ENCODE measurements at regions of chr2 and their contacts with region 1.

Region 1: GRCh38 chr2:237572021-237572741 is 5.8 kb downstream of the PRLH start:
- DNase-seq: peak; percentile 78 to 92 (median 84)
- ATAC-seq: peak; percentile 94
- H3K4me3 ChIP-seq: no peak overlapping the region
- H3K4me3 Mint-ChIP-seq: no peak overlapping the region
- H3K27ac ChIP-seq: no peak overlapping the region
- H3K27ac Mint-ChIP-seq: no peak overlapping the region
- H3K4me1 ChIP-seq: peaks cover 6% of the 10 kb centered on the region
- H3K4me1 Mint-ChIP-seq: peaks cover 5% of the 10 kb centered on the region
- H3K27me3 ChIP-seq: peaks cover 0 to 4% of the 10 kb centered on the region in 2 experiments
- H3K27me3 Mint-ChIP-seq: peaks cover 7% of the 10 kb centered on the region
- CTCF ChIP-seq: peak; percentile 99

Region 2: DNA sequence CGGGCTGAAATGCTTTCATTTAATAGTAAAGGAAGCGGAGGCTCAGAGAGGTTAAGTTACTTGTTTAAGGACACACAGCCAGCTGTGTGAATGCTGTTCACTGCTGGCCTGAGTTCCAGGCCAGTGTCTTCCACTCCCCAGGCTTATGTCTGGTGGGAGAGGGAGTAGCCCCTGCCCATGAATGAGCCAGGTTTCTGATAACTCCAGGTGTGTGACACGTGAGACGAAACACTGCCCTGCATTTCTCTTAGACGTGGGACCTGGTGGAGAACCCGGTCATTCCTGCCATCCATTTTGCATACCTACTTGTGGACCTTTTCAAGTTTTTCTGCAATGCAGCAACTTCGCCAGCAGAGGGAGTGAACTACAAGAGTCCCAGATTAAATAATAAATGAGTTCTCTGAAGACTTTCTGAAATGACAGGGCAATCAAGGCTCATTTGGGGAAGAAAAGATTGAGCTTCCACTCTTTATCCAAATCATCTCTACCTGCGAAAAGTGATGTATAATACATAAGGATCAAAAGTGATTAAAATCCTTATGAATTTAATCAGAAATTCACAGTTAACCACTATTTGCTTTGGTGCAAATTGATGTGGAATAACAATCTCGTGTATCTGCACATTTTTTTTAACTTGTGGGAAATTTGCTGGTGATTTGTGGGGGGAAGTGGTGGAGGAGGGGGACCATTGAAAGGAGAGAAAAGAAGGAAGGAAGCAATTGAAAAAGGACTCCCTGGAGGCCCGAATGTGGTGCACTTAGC is 1228.6 kb before region 1 on chr2:
- CTCF ChIA-PET with region 1: no interaction called
- POLR2A ChIA-PET with region 1: no interaction called
- intact Hi-C with region 1: loop called in 1 of 2 experiments (anchors 10 kb)
- DNase-seq: peak in 13 of 14 experiments; percentile 15 to 73 (median 37)
- ATAC-seq: peak; percentile 51
- H3K4me3 ChIP-seq: no peak overlapping the region
- H3K4me3 Mint-ChIP-seq: no peak overlapping the region
- H3K27ac ChIP-seq: no peak overlapping the region
- H3K27ac Mint-ChIP-seq: no peak overlapping the region
- H3K4me1 ChIP-seq: no peaks in the 10 kb centered on the region
- H3K4me1 Mint-ChIP-seq: no peaks in the 10 kb centered on the region
- H3K27me3 ChIP-seq: no peaks in the 10 kb centered on the region
- H3K27me3 Mint-ChIP-seq: peaks cover 3% of the 10 kb centered on the region
- CTCF ChIP-seq: peak; percentile 91

Region 3: GRCh38 chr2:237154082-237154638 is 418.0 kb before region 1 on chr2:
- CTCF ChIA-PET with region 1: interaction called, 11 read pairs
- POLR2A ChIA-PET with region 1: no interaction called
- intact Hi-C with region 1: loop called (anchors 1 kb)
- DNase-seq: peak; percentile 17 to 74 (median 40)
- ATAC-seq: peak; percentile 66
- H3K4me3 ChIP-seq: no peak overlapping the region
- H3K4me3 Mint-ChIP-seq: no peak overlapping the region
- H3K27ac ChIP-seq: no peak overlapping the region
- H3K27ac Mint-ChIP-seq: no peak overlapping the region
- H3K4me1 ChIP-seq: peaks cover 4% of the 10 kb centered on the region
- H3K4me1 Mint-ChIP-seq: no peaks in the 10 kb centered on the region
- H3K27me3 ChIP-seq: no peaks in the 10 kb centered on the region
- H3K27me3 Mint-ChIP-seq: no peaks in the 10 kb centered on the region
- CTCF ChIP-seq: peak; percentile 61

Region 4: DNA sequence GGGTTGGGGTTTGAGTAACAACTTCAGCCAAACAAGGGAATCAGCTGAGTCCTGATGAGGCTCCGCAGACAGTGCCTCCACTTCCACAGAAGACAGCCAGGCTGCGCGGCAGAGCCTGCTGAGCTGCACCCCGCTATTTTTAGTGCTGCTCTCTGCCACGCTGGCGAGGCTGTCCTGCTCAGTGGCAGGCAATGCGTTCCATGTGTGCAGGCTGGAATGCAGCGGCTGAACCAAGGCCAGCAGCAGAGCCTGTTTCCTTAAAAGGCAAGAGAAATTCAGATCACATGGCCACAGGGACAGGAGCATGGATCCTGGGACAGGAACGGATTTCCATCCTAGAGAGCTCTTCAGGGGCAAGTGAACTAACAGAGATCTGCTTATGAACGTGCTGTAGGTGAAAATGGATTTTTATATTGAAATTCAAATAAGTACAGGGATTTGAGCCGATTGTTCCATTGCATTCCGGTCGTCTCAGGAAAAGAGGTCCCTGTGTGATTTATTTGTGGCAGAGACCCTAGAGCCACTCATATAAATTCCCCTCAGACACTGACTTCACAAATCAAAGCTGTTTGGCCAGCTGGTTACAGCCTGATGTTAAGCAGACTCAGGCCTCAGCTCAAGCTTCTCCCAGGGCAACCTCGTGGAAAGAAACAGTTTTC is 256.9 kb before region 1 on chr2:
- CTCF ChIA-PET with region 1: no interaction called
- POLR2A ChIA-PET with region 1: no interaction called
- intact Hi-C with region 1: no loop called
- DNase-seq: no peak
- ATAC-seq: no peak
- H3K4me3 ChIP-seq: no peak overlapping the region
- H3K4me3 Mint-ChIP-seq: no peak overlapping the region
- H3K27ac ChIP-seq: no peak overlapping the region
- H3K27ac Mint-ChIP-seq: no peak overlapping the region
- H3K4me1 ChIP-seq: no peaks in the 10 kb centered on the region
- H3K4me1 Mint-ChIP-seq: no peaks in the 10 kb centered on the region
- H3K27me3 ChIP-seq: no peaks in the 10 kb centered on the region
- H3K27me3 Mint-ChIP-seq: peaks cover 11% of the 10 kb centered on the region
- CTCF ChIP-seq: no peak

Region 5: DNA sequence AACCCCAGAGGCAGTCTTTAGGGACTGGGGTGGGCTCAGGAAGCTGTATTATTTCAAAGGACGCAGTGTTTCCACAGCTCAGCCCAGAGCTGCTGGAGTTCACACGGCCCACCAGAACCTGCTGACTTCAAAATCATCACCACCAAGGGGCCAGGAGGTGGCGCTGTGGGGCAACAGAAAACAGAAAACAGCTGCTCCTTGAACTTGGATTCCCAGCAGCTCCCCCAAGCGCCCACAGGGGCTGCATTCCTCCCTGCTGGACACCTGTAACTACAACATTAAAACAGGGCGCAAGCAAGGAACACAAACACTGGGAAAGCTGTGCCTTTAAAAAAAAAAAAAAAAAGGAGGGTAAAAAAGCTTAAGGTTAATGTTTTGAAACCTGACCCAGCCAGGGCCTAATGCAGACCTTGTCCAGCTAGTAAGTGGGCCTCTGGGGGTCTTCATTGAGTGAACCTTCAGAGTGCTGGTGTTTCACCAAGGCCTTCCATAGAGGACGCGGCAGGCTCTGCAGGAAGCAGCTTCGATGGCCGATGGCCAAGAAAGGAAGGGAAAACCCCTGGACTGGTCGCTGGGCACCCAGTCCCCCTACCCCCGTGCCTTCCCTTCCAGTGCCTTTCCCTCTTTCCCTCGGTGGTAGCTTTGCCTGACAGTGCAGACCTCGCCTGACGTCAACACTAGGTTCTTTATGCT is 59.3 kb before region 1 on chr2:
- CTCF ChIA-PET with region 1: interaction called, 37 read pairs
- POLR2A ChIA-PET with region 1: interaction called, 5 read pairs
- intact Hi-C with region 1: loop called (anchors 1 kb)
- DNase-seq: peak; percentile 66 to 88 (median 74)
- ATAC-seq: peak; percentile 80
- H3K4me3 ChIP-seq: no peak overlapping the region
- H3K4me3 Mint-ChIP-seq: no peak overlapping the region
- H3K27ac ChIP-seq: no peak overlapping the region
- H3K27ac Mint-ChIP-seq: no peak overlapping the region
- H3K4me1 ChIP-seq: peaks cover 7% of the 10 kb centered on the region
- H3K4me1 Mint-ChIP-seq: no peaks in the 10 kb centered on the region
- H3K27me3 ChIP-seq: peaks cover 0 to 4% of the 10 kb centered on the region in 2 experiments
- H3K27me3 Mint-ChIP-seq: peaks cover 1% of the 10 kb centered on the region
- CTCF ChIP-seq: peak; percentile 84

Region 6: GRCh38 chr2:237556773-237557632 is 15.2 kb before region 1 on chr2:
- CTCF ChIA-PET with region 1: interaction called, 10 read pairs
- POLR2A ChIA-PET with region 1: no interaction called
- intact Hi-C with region 1: no loop called
- DNase-seq: peak in 8 of 14 experiments; percentile 8 to 34 (median 13)
- ATAC-seq: peak; percentile 64
- H3K4me3 ChIP-seq: no peak overlapping the region
- H3K4me3 Mint-ChIP-seq: no peak overlapping the region
- H3K27ac ChIP-seq: no peak overlapping the region
- H3K27ac Mint-ChIP-seq: no peak overlapping the region
- H3K4me1 ChIP-seq: no peaks in the 10 kb centered on the region
- H3K4me1 Mint-ChIP-seq: peaks cover 12% of the 10 kb centered on the region
- H3K27me3 ChIP-seq: peaks cover 0 to 4% of the 10 kb centered on the region in 2 experiments
- H3K27me3 Mint-ChIP-seq: peaks cover 10% of the 10 kb centered on the region
- CTCF ChIP-seq: no peak